ENCODE measurements at regions of chr16 and their contacts with region 1.

Region 1: GRCh38 chr16:67645397-67646121 is 615 bp downstream of the CARMIL2 start:
- DNase-seq: no peak
- H3K4me3 ChIP-seq: no peak overlapping the region
- H3K27ac ChIP-seq: no peak overlapping the region
- H3K4me1 ChIP-seq: peaks cover 0 to 17% of the 10 kb centered on the region in 2 donors
- H3K27me3 ChIP-seq: peaks cover 26% of the 10 kb centered on the region
- CTCF ChIP-seq: no peak
- POLR2A ChIP-seq: no peak

Region 2: DNA sequence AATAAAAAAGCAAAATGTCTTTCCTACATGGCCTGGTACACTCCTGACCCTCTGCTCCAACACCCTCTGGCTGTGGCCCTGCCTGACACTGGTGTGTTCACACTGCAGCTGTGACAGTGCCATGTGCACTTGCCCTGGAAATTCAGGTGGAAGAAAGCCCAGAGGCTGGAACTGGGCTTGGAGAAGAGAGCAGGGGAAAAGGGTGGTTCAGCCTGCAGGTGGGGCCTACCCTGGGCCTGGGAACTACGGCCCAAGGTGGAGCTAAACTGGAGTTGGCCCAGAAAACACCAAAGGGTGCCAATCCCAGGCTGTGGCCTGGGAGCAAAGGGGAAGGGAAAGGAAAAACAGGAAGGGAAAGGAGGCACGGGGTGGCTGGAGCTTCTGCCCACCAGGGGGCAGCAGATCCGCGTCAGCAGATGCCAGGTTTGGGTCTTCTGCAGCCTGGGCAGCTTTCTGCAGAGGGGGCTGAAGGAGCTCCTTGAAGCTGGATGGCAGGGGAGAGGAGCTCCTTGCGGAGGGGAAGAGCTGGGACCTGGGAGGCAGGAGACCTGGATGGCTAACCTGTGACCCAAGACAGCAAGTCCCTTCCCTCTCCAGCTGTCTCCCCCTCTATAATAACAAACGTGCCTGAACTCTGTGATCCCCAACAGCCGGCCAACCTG is 98.7 kb before region 1 on chr16:
- intact Hi-C with region 1: loop called in 1 of 2 experiments (anchors 5 kb)
- DNase-seq: peak; percentile 65 to 87 (median 80)
- H3K4me3 ChIP-seq: no peak overlapping the region
- H3K27ac ChIP-seq: peak overlapping the region in 2 of 5 donors; percentile 1 to 53
- H3K4me1 ChIP-seq: peaks cover 0 to 14% of the 10 kb centered on the region in 2 donors
- H3K27me3 ChIP-seq: no peaks in the 10 kb centered on the region
- CTCF ChIP-seq: peak; percentile 86 to 95 (median 93)
- POLR2A ChIP-seq: no peak